ENCODE measurements at regions of chr3 and their contacts with region 1.

Region 1: DNA sequence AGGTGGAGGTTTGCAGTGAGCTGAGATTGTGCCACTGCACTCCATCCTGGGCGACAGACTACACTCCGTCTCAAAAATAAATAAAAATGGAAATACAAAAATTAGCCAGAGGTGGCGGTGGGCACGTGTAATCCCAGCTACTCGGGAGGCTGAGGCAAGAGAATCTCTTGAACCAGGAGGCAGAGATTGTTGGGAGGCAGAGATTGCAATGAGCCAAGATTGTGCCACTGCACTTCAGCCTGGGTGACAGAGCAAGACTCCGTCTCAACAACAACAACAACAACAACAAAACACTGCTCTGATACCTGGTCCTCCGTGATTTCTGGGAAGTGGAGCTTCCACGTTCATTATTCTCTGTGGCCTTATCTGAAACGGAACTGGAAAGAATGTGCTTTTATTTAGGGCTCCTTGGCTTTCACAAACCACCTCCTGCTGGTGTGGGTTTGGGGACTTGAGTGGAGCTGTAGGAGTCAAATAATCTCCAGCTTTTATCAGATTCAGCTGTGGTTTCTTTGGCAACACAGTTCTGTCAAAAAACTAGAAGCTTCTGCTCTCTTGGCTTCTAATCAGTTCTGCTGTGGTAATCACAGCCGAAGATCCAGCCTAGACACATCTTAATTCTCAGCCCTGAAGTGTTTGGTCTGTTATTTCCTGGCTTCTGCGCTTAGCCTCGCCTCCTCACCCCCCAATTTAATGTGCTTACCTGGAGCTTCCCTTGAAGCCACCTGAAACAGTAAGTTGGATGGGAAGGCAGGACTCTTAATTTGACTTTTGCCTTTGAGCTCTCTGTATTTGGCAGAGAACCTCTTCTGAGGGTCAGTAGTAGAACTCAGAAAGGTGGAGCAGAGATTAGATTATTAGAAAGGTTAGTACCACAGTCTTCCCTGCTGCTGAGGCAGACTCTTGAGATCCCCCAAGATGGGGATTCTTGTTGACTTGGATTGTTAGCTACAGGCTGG is 21.4 kb downstream of the IRAK2 start:
- DNase-seq: peak in 5 of 35 experiments; percentile 19 to 61 (median 27)
- ATAC-seq: peak; percentile 78 to 87 (median 80)
- H3K4me3 ChIP-seq: peak overlapping the region in 1 of 2 donors; percentile 23
- H3K4me3 Mint-ChIP-seq: peak overlapping the region; percentile 18 to 52 (median 50)
- H3K27ac ChIP-seq: peak overlapping the region; percentile 58
- H3K27ac Mint-ChIP-seq: peak overlapping the region; percentile 96 to 97
- H3K4me1 ChIP-seq: peaks cover 38 to 67% of the 10 kb centered on the region in 2 experiments
- H3K4me1 Mint-ChIP-seq: peaks cover 47 to 60% (median 53%) of the 10 kb centered on the region in 3 donors
- H3K27me3 ChIP-seq: no peaks in the 10 kb centered on the region
- H3K27me3 Mint-ChIP-seq: no peaks in the 10 kb centered on the region

Region 2: GRCh38 chr3:9843715-9844438 is 342.2 kb before region 1 on chr3 and contains the start of gene RPUSD3:
- CTCF ChIA-PET with region 1: no interaction called
- POLR2A ChIA-PET with region 1: no interaction called
- DNase-seq: peak; percentile 79 to 98 (median 92)
- ATAC-seq: peak; percentile 99 to 100 (median 99)
- H3K4me3 ChIP-seq: peak within 1 kb of the TSS; percentile 81 to 95
- H3K4me3 Mint-ChIP-seq: peak within 1 kb of the TSS; percentile 98 to 100 (median 98)
- H3K27ac ChIP-seq: peak within 1 kb of the TSS; percentile 60
- H3K27ac Mint-ChIP-seq: peak within 1 kb of the TSS; percentile 91 to 93
- H3K4me1 ChIP-seq: peaks cover 7 to 25% of the 10 kb centered on the region in 2 experiments
- H3K4me1 Mint-ChIP-seq: peaks cover 23 to 31% (median 30%) of the 10 kb centered on the region in 3 donors
- H3K27me3 ChIP-seq: no peaks in the 10 kb centered on the region
- H3K27me3 Mint-ChIP-seq: no peaks in the 10 kb centered on the region
- total RNA-seq, gene RPUSD3: 23.6 to 70.5 (median 64.7) TPM

Region 3: GRCh38 chr3:10213156-10213792 is 27.2 kb after region 1 on chr3:
- CTCF ChIA-PET with region 1: no interaction called
- POLR2A ChIA-PET with region 1: interaction called in 1 of 2 experiments, 11 read pairs
- DNase-seq: no peak
- ATAC-seq: no peak
- H3K4me3 ChIP-seq: no peak overlapping the region
- H3K4me3 Mint-ChIP-seq: no peak overlapping the region
- H3K27ac ChIP-seq: no peak overlapping the region
- H3K27ac Mint-ChIP-seq: no peak overlapping the region
- H3K4me1 ChIP-seq: no peaks in the 10 kb centered on the region
- H3K4me1 Mint-ChIP-seq: peaks cover 0 to 5% (median 0%) of the 10 kb centered on the region in 3 donors
- H3K27me3 ChIP-seq: no peaks in the 10 kb centered on the region
- H3K27me3 Mint-ChIP-seq: no peaks in the 10 kb centered on the region

Region 4: GRCh38 chr3:10357592-10358308 is 171.7 kb after region 1 on chr3:
- CTCF ChIA-PET with region 1: no interaction called
- POLR2A ChIA-PET with region 1: no interaction called
- DNase-seq: no peak
- ATAC-seq: no peak
- H3K4me3 ChIP-seq: no peak overlapping the region
- H3K4me3 Mint-ChIP-seq: no peak overlapping the region
- H3K27ac ChIP-seq: no peak overlapping the region
- H3K27ac Mint-ChIP-seq: no peak overlapping the region
- H3K4me1 ChIP-seq: no peaks in the 10 kb centered on the region
- H3K4me1 Mint-ChIP-seq: peaks cover 5 to 10% (median 9%) of the 10 kb centered on the region in 3 donors
- H3K27me3 ChIP-seq: peaks cover 0 to 32% of the 10 kb centered on the region in 2 experiments
- H3K27me3 Mint-ChIP-seq: peaks cover 20% of the 10 kb centered on the region in 2 donors

Region 5: GRCh38 chr3:10417849-10418248 is 231.8 kb after region 1 on chr3:
- CTCF ChIA-PET with region 1: no interaction called
- POLR2A ChIA-PET with region 1: no interaction called
- DNase-seq: peak in 1 of 35 experiments; percentile 34
- ATAC-seq: no peak
- H3K4me3 ChIP-seq: no peak overlapping the region
- H3K4me3 Mint-ChIP-seq: no peak overlapping the region
- H3K27ac ChIP-seq: no peak overlapping the region
- H3K27ac Mint-ChIP-seq: no peak overlapping the region
- H3K4me1 ChIP-seq: peaks cover 0 to 12% of the 10 kb centered on the region in 2 experiments
- H3K4me1 Mint-ChIP-seq: peaks cover 10 to 11% (median 10%) of the 10 kb centered on the region in 3 donors
- H3K27me3 ChIP-seq: peaks cover 0 to 22% of the 10 kb centered on the region in 2 experiments
- H3K27me3 Mint-ChIP-seq: peaks cover 4 to 9% of the 10 kb centered on the region in 2 donors

Measured in T-cell (primary cell).